Aorta (tissue), 5 donors: ENCODE measurements at regions of chr5 and their contacts with region 1.

Region 1: DNA sequence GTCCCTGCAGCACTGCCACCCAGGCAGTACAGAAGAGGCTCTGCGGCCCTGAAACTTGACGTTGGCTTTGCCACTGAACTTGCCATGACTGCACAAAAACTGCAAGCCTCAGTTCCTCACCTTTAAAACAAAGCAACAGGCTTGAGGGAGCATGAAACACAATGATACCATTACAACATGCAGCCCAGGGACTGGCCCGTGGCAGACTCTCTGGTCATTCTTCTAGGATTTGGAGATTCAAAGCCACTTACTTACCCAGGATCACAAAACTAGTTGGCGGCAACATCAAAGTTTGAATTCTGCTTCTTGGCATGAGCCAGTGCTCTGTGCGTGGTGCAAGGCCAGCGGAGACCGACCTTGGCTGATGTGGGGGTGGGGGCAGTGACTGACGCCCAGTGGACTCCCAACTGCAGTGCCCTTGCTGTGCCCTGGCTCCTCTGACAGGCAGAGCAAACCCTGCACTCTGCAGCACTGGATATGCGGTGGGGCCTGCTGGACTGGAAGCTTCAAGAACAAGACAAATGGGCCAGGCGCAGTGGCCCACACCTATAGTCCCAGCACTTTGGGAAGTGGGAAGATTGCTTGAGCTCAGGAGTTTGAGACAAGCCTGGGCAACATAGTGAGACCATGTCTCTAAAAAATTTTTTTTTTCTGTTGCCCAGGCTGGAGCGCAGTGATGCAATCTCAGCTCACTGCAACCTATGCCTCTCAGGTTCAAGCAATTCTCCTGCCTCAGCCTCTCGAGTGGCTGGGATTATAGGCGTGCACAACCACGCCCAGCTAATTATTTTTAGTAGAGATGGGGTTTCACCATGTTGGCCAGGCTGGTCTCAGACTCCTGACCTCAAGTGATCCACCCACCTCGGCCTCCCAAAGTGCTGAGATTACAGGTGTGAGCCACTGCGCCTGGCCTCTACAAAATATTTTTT is 18.9 kb downstream of the SQSTM1 start:
- DNase-seq: peak in 1 of 2 donors; percentile 73
- ATAC-seq: no peak
- H3K4me3 ChIP-seq: no peak overlapping the region
- H3K27ac ChIP-seq: no peak overlapping the region
- H3K4me1 ChIP-seq: no peaks in the 10 kb centered on the region
- H3K27me3 ChIP-seq: no peaks in the 10 kb centered on the region

Region 2: GRCh38 chr5:179187229-179187678 is 652.3 kb before region 1 on chr5:
- intact Hi-C with region 1: no loop called
- DNase-seq: peak in 1 of 2 donors; percentile 38
- ATAC-seq: no peak
- H3K4me3 ChIP-seq: no peak overlapping the region
- H3K27ac ChIP-seq: no peak overlapping the region
- H3K4me1 ChIP-seq: no peaks in the 10 kb centered on the region
- H3K27me3 ChIP-seq: no peaks in the 10 kb centered on the region

Region 3: DNA sequence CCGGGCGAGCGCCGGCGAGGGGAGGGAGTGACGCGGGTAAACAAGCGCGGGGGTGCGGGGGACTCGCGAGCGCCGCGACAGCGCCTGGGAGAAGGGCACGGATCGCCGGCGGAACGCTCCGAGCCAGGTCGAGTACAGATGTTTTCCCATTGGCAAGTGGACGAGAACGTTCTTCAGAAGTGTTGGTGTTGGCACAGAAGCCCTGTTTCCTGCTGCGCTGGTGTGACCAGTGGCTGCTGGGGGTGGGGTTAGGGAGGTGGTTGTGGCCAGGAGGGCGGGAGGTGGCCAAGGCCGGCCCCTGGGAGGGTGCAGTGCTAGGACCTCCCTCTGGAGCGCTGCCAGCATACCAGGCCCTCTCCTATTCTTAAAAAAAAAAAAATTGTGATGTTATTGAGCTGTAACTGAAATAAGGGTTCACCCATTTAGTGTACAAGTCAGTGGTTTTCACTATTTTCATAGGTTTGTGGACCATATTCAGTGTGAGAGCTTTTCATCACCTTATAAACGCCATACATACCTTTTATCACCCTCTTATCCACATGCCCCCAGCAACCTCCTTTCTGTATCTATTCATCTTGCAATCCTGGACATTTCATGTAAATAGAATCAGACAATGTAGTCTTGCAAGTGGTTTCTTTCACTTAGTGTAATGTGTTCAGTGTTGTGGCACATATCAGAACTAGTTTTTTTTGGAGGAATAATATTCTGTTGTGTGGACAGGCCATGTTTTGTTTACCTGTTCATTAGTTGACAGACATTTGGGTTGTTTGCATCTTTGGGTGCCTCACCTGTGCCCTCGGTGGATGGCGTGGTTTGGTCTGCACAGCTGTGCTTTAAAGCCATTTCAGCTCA is 17.8 kb before region 1 on chr5:
- intact Hi-C with region 1: loop called in 1 of 2 experiments (anchors 1 kb)
- DNase-seq: peak; percentile 98
- ATAC-seq: peak; percentile 88
- H3K4me3 ChIP-seq: peak overlapping the region; percentile 49 to 96
- H3K27ac ChIP-seq: peak overlapping the region; percentile 92 to 96
- H3K4me1 ChIP-seq: no peaks in the 10 kb centered on the region
- H3K27me3 ChIP-seq: peaks cover 0 to 1% of the 10 kb centered on the region in 2 donors